Activated CD4-positive, alpha-beta memory T cell treated with anti-CD3 and anti-CD28 coated beads for 36 hours (primary cell): ENCODE measurements at regions of chr13 and their contacts with region 1.

Region 1: DNA sequence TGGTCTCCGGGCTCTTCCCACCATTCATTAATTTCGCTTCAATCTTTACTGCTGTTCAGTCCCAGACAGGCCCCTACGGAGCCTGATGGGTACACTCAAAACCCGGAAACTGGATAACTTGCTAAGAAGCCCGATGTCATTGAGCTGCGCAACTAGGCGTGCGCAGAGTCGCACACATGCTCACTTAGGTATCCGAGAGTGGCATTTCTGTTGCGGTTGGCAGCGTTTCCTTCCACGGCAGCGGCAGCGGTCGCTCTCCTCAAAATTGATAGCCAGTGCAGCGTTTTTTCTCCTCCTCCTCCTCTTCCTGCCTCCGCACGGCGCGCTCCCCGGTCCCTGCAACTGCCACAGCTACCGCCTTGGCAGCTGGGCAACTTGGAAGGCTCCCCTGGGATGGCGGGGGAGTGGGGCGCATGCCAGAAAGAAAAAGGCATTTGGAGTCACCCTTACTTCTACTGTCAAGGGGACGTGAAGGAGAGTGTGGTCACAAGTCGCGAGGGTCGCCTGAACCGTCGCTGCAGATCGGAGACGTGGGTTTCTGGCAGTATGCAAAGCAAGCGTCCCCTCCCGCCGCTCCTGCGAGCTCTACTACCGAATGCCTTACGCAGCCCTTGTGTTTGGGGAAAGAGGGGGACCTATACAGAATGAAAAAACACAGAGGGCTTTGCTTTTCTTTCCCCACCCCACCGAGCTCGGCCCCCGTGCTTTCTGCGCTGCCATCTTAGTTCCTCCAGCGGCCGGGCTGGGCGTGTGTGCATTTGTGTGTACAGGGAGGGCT is 2.4 kb upstream of the MYCBP2 start:
- DNase-seq: peak; percentile 96
- H3K4me3 Mint-ChIP-seq: peak overlapping the region; percentile 98
- H3K27ac Mint-ChIP-seq: peak overlapping the region; percentile 96
- H3K4me1 Mint-ChIP-seq: peaks cover 35% of the 10 kb centered on the region
- H3K27me3 Mint-ChIP-seq: no peaks in the 10 kb centered on the region

Region 2: GRCh38 chr13:76991796-76992547 is 337.4 kb before region 1 on chr13 and contains the start of gene CLN5:
- CTCF ChIA-PET with region 1: no interaction called
- POLR2A ChIA-PET with region 1: interaction called, 4 read pairs
- intact Hi-C with region 1: loop called (anchors 1 kb)
- DNase-seq: peak; percentile 97
- H3K4me3 Mint-ChIP-seq: peak within 1 kb of the TSS; percentile 94
- H3K27ac Mint-ChIP-seq: peak within 1 kb of the TSS; percentile 99
- H3K4me1 Mint-ChIP-seq: peaks cover 41% of the 10 kb centered on the region
- H3K27me3 Mint-ChIP-seq: peaks cover 1% of the 10 kb centered on the region
- total RNA-seq, gene CLN5: 12.4 to 14.0 TPM

Region 3: DNA sequence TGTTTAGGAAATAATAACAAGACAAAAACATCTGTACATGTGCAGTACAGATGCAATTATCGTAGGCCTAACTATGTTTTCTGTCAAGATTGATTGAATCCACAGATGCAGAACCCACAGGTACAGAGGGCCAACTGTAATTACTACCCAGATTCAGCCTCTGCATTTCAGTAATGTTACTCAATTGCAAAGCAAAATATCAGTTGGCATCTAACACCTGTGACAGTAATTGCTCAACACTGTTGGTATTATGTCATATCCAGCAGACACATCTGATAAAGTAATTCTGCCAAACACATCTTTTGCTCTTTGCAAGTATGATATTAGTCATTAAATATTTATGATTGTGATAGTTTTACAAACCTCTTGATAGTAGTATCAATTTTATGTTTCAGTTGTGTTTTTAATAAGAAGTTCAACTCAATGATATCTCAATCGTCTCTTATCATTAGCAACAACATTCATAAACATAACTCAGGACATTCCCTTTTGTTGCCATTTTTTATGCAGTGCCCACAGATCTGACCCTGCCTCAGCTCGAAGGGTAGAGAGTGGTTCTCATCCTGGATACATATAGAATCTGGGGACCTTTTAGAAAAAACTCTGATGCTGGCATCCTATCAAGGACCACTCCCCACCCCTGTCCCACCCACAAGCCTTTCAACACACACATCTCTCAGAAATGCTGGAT is 107.2 kb before region 1 on chr13:
- CTCF ChIA-PET with region 1: no interaction called
- POLR2A ChIA-PET with region 1: interaction called, 4 read pairs
- intact Hi-C with region 1: loop called (anchors 1 kb)
- DNase-seq: no peak
- H3K4me3 Mint-ChIP-seq: no peak overlapping the region
- H3K27ac Mint-ChIP-seq: no peak overlapping the region
- H3K4me1 Mint-ChIP-seq: peaks cover 35% of the 10 kb centered on the region
- H3K27me3 Mint-ChIP-seq: no peaks in the 10 kb centered on the region

Region 4: DNA sequence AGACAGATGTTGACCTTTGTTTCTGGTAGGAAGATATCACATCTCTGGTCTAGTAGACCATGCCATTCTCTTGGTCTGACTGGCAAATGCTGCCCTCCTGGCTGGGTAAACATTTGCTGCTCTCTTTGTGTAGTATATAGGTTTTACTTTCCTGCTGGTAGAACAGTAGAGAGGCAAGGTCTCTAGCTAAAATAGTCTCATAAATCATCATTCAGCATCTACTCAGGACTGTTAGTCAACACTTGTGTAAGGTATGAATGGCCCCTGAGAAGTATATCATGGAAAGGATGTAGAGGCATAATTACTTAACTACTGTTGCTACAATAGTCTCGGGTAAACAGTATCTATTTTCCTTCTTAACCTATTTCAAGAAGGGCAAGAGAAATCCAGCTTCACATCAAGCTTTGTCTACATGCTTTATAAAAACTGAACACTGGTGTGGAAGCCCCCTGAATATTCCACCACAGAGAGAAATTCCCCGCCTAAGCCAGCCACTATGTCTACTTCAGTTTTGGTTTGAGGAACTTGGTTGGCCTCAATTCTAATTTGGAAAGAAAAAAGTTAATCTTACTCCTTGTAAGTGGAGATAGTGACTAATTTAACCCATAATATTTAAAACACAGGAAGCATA is 15.9 kb after region 1 on chr13:
- CTCF ChIA-PET with region 1: interaction called, 6 read pairs
- POLR2A ChIA-PET with region 1: interaction called, 12 read pairs
- intact Hi-C with region 1: loop called (anchors 1 kb)
- DNase-seq: peak; percentile 53
- H3K4me3 Mint-ChIP-seq: peak overlapping the region; percentile 51
- H3K27ac Mint-ChIP-seq: peak overlapping the region; percentile 90
- H3K4me1 Mint-ChIP-seq: peaks cover 24% of the 10 kb centered on the region
- H3K27me3 Mint-ChIP-seq: no peaks in the 10 kb centered on the region

Region 5: GRCh38 chr13:77697217-77698103 is 368.1 kb after region 1 on chr13 and contains the start of gene SLAIN1:
- CTCF ChIA-PET with region 1: no interaction called
- POLR2A ChIA-PET with region 1: interaction called, 5 read pairs
- intact Hi-C with region 1: loop called (anchors 1 kb)
- DNase-seq: peak; percentile 85
- H3K4me3 Mint-ChIP-seq: peak within 1 kb of the TSS; percentile 92
- H3K27ac Mint-ChIP-seq: peak within 1 kb of the TSS; percentile 49
- H3K4me1 Mint-ChIP-seq: peaks cover 32% of the 10 kb centered on the region
- H3K27me3 Mint-ChIP-seq: no peaks in the 10 kb centered on the region
- total RNA-seq, gene SLAIN1: 21.8 to 25.8 TPM